Activated CD4-positive, alpha-beta memory T cell treated with anti-CD3 and anti-CD28 coated beads, Interleukin-2, amount 10 ng/mL, durations not matched to agents 7 days and 5 days (primary cell): ENCODE measurements at regions of chr7 and their contacts with region 1.

Region 1: GRCh38 chr7:128431221-128431620 is 21.4 kb upstream of the IMPDH1 start:
- DNase-seq: no peak
- H3K4me3 Mint-ChIP-seq: no peak overlapping the region
- H3K27ac Mint-ChIP-seq: no peak overlapping the region
- H3K4me1 Mint-ChIP-seq: peaks cover 9% of the 10 kb centered on the region
- H3K27me3 Mint-ChIP-seq: peaks cover 21% of the 10 kb centered on the region

Region 2: GRCh38 chr7:128236924-128237586 is 194.2 kb before region 1 on chr7:
- CTCF ChIA-PET with region 1: no interaction called
- POLR2A ChIA-PET with region 1: no interaction called
- DNase-seq: peak; percentile 57
- H3K4me3 Mint-ChIP-seq: no peak overlapping the region
- H3K27ac Mint-ChIP-seq: peak overlapping the region; percentile 38
- H3K4me1 Mint-ChIP-seq: peaks cover 14% of the 10 kb centered on the region
- H3K27me3 Mint-ChIP-seq: peaks cover 24% of the 10 kb centered on the region

Region 3: GRCh38 chr7:128455551-128456254 is 24.5 kb after region 1 on chr7 and contains the start of gene HILPDA:
- CTCF ChIA-PET with region 1: interaction called, 285 read pairs
- POLR2A ChIA-PET with region 1: interaction called, 5 read pairs
- DNase-seq: peak; percentile 95
- H3K4me3 Mint-ChIP-seq: peak within 1 kb of the TSS; percentile 94
- H3K27ac Mint-ChIP-seq: peak within 1 kb of the TSS; percentile 90
- H3K4me1 Mint-ChIP-seq: peaks cover 56% of the 10 kb centered on the region
- H3K27me3 Mint-ChIP-seq: peaks cover 20% of the 10 kb centered on the region
- total RNA-seq, gene HILPDA: 51.8 to 53.4 TPM

Region 4: GRCh38 chr7:128697302-128697905 is 266.2 kb after region 1 on chr7:
- CTCF ChIA-PET with region 1: no interaction called
- POLR2A ChIA-PET with region 1: no interaction called
- DNase-seq: peak; percentile 56
- H3K4me3 Mint-ChIP-seq: peak overlapping the region; percentile 66
- H3K27ac Mint-ChIP-seq: no peak overlapping the region
- H3K4me1 Mint-ChIP-seq: peaks cover 12% of the 10 kb centered on the region
- H3K27me3 Mint-ChIP-seq: peaks cover 51% of the 10 kb centered on the region